PC-3 (cell line): ENCODE measurements at regions of chr2 and their contacts with region 1.

Region 1: DNA sequence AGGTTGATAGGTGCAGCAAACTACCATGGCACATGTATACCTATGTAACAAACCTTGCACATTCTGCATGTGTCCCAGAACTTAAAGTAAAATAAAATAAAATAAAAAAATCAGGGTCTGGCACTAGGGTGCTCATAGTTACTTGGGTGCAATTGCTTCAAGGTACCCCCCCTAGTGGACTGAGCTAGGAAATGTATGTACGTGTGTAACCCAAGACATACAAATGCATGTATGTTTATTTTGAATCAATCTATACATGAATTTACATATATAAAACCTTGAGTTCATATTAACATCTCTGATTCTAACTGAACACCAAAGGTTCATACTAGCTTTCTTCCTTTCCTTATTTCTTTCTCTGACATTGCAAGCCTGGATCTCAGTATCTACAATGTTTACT is 51.5 kb downstream of the USP37 start:
- DNase-seq: peak; percentile 34
- ATAC-seq: no peak
- H3K4me3 ChIP-seq: no peak overlapping the region
- H3K27ac ChIP-seq: no peak overlapping the region
- H3K4me1 ChIP-seq: no peaks in the 10 kb centered on the region
- H3K27me3 ChIP-seq: no peaks in the 10 kb centered on the region
- CTCF ChIP-seq: peak; percentile 51

Region 2: DNA sequence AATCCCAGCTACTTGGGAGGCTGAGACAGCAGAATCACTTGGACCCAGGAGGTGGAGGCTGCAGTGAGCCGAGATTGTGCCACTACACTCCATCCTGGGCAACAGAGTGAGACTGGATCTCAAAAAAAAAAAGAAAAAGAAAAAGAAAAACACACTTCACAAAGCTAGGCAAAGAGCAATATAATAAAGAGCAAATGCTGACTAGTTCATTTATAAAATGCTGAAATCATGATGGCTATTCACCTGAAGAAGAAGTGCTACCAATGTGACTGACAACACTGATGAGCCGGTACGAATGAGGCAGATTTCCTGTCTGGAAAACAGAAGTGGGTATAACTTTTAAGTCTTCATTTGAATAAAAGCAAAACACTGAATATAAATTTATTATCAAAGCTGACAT is 59.8 kb before region 1 on chr2:
- CTCF ChIA-PET with region 1: no interaction called
- POLR2A ChIA-PET with region 1: no interaction called
- intact Hi-C with region 1: no loop called
- DNase-seq: no peak
- ATAC-seq: no peak
- H3K4me3 ChIP-seq: no peak overlapping the region
- H3K27ac ChIP-seq: no peak overlapping the region
- H3K4me1 ChIP-seq: no peaks in the 10 kb centered on the region
- H3K27me3 ChIP-seq: no peaks in the 10 kb centered on the region
- CTCF ChIP-seq: no peak

Region 3: GRCh38 chr2:218642786-218643185 is 126.2 kb after region 1 on chr2:
- CTCF ChIA-PET with region 1: interaction called, 13 read pairs
- POLR2A ChIA-PET with region 1: no interaction called
- intact Hi-C with region 1: no loop called
- DNase-seq: no peak
- ATAC-seq: no peak
- H3K4me3 ChIP-seq: no peak overlapping the region
- H3K27ac ChIP-seq: no peak overlapping the region
- H3K4me1 ChIP-seq: peaks cover 31% of the 10 kb centered on the region
- H3K27me3 ChIP-seq: no peaks in the 10 kb centered on the region
- CTCF ChIP-seq: no peak